Left cardiac atrium (tissue), 4 donors: ENCODE measurements at regions of chr2 and their contacts with region 1.

Region 1: DNA sequence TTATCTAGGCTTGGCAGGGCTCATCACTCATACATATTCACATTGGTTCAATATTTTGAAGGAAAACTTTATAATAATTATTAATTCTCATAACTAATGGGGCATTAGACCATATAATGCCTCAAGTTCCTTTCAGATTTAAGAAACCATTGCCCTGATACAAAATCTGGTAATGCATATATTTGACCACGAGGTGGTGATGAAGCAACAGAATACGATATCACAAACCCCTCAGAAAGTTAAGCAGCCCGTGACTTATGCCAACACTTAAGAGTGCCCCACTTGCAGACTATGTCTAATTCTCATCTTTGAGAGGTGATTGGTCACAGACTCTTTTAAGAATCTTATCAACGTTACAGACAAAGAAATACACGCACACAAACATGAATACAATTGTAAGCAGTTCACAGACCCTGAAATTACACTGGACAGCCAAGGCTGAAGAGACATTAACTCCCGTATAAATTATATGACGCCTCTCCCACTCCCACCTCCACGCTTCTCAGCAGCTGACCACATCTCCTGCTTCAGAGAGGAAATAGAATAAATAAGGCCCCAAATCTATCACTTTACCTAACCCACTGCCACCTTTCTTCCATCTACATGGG is 20.7 kb upstream of the DNAH6 start:
- DNase-seq: no peak
- ATAC-seq: peak; percentile 78 to 81

Region 2: GRCh38 chr2:84631985-84632384 is 136.3 kb after region 1 on chr2:
- intact Hi-C with region 1: loop called in 1 of 2 experiments (anchors 2 kb)
- DNase-seq: no peak
- ATAC-seq: no peak

Region 3: DNA sequence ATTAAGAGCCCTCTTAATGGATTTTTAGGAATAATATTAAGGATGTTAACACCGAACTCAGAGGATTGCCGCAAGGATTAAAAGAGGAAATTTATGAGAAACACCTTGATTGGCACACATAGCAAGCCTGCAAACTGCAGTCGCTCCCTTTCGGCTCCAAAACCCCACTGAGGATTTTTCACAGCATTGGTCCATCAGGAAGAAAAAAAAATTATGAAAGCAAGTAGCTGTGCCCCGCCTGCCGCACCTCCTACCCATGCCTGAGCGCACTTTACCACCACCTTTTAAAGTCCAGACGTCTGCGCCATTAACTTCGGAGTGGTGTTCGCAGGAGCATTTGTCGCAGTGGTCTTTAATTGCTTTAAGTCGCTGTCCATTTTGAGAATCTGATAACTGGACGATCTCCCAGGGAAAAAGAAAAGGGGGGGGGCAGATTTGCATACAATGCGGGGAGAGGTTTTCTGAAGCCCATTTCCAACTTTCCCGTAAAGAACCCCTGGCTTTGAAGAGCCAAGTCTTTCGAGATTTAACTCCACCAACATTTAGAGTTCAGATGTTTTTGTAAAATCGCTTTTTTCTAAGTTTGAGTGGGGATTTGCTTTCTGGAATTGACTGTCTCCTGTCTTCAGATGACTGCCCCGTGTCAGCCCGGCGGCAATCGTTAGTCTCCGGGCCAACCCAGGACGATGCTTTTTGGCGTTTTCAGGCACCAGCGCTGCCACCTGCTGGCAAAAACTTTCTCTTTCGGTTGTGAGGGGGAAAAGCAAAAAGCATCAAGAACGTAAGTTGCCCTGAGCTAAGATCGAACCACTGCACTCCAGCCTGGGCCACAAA is 386.2 kb after region 1 on chr2:
- intact Hi-C with region 1: loop called (anchors 5 to 10 kb)
- DNase-seq: peak; percentile 83
- ATAC-seq: peak; percentile 80 to 86

Region 4: GRCh38 chr2:84925724-84926376 is 430.2 kb after region 1 on chr2:
- intact Hi-C with region 1: loop called in 1 of 2 experiments (anchors 2 kb)
- DNase-seq: peak; percentile 94
- ATAC-seq: peak; percentile 83 to 91